ENCODE measurements at regions of chr17 and their contacts with region 1.

Region 1: GRCh38 chr17:75338335-75338734 is 49.1 kb upstream of the SLC25A19 start:
- DNase-seq: peak in 6 of 9 donors; percentile 30 to 55 (median 47)
- ATAC-seq: peak; percentile 63
- H3K4me3 ChIP-seq: peak overlapping the region; percentile 4
- H3K4me3 Mint-ChIP-seq: peak overlapping the region; percentile 63 to 84 (median 78)
- H3K27ac ChIP-seq: peak overlapping the region; percentile 58
- H3K27ac Mint-ChIP-seq: peak overlapping the region; percentile 23 to 97 (median 86)
- H3K4me1 ChIP-seq: peaks cover 33 to 76% of the 10 kb centered on the region in 2 donors
- H3K4me1 Mint-ChIP-seq: peaks cover 58 to 92% (median 79%) of the 10 kb centered on the region in 7 donors
- H3K27me3 ChIP-seq: no peaks in the 10 kb centered on the region
- H3K27me3 Mint-ChIP-seq: no peaks in the 10 kb centered on the region

Region 2: DNA sequence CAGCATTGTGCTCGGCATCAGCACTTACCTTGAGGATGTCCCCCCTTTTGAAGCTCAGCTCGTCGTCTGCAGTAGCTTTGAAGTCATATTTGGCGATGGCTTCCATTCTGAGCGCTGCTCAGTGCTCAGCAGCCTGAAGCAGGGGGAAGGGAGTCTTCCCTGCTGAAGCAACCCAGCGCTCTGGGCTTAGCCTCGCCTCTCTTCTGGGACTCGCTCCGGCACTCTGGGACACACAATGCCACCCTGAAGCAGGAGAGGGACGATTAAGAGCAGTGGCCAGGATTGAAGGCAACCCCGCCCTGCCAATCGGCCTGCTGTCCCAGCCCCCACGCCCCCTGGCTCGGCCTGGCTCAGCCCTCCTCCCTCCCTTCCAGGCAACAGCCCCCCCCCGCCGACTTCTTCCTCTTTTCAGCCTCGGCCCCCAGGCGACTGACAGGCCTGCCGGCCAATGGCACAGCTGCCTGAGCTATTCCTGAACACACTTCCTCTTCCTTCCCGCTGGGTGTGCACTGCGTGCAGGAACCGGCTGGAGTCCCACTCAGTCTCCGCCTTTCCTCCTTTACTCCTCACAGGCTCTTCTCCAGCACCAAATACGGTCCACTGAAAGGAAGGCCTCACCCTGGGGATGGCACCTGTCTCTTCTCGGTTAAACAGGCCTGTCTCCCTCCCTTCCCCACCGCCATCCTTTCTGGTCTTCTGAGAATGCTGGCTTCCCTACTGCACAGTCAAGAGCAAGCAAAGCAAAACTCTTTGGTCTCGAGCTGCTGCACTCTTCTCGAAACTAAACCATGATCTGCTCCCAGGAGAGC is 55.4 kb after region 1 on chr17:
- CTCF ChIA-PET with region 1: interaction called, 14 read pairs
- POLR2A ChIA-PET with region 1: interaction called, 6 read pairs
- intact Hi-C with region 1: loop called (anchors 2 to 5 kb)
- DNase-seq: peak; percentile 50 to 79 (median 55)
- ATAC-seq: peak; percentile 95
- H3K4me3 ChIP-seq: peak overlapping the region; percentile 55
- H3K4me3 Mint-ChIP-seq: peak overlapping the region; percentile 87 to 98 (median 93)
- H3K27ac ChIP-seq: peak overlapping the region; percentile 48
- H3K27ac Mint-ChIP-seq: peak overlapping the region; percentile 45 to 93 (median 83)
- H3K4me1 ChIP-seq: peaks cover 11 to 49% of the 10 kb centered on the region in 2 donors
- H3K4me1 Mint-ChIP-seq: peaks cover 70 to 95% (median 85%) of the 10 kb centered on the region in 7 donors
- H3K27me3 ChIP-seq: no peaks in the 10 kb centered on the region
- H3K27me3 Mint-ChIP-seq: no peaks in the 10 kb centered on the region

Measured in naive thymus-derived CD4-positive, alpha-beta T cell (primary cell).